ENCODE measurements at regions of chr13 and their contacts with region 1.

Region 1: DNA sequence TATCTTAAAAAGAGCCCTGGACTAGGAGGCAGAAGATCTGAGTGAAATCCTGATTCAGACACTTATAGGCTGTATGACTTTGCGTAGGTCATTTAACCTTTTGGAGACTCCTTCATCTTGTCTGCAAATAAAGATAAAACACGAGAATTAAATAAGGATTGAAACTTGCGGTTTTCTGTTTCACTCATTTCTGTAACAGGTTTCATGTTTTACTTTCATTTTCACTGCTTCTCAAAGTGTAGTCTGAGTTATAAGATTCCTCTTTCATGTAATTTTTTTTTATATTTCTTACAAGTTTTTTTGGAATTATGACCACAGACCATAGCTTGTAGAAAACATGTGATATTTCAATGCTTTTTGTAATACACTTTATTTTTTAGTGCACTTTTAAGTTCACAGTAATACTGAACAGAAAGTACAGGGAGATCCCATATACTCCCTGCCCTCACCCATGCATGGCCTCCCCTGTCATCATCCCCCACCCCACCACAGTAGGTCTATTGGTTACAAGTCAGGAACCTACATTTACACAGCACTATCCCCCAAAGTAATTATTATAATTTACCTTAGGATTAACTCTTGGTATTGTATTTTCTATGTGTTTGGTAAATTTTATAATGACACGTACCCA is 174.6 kb downstream of the ITGBL1 start:
- DNase-seq: peak; percentile 75
- H3K4me3 Mint-ChIP-seq: peak overlapping the region; percentile 14
- H3K27ac Mint-ChIP-seq: peak overlapping the region; percentile 25
- H3K4me1 Mint-ChIP-seq: peaks cover 18% of the 10 kb centered on the region
- H3K27me3 Mint-ChIP-seq: peaks cover 21% of the 10 kb centered on the region

Region 2: DNA sequence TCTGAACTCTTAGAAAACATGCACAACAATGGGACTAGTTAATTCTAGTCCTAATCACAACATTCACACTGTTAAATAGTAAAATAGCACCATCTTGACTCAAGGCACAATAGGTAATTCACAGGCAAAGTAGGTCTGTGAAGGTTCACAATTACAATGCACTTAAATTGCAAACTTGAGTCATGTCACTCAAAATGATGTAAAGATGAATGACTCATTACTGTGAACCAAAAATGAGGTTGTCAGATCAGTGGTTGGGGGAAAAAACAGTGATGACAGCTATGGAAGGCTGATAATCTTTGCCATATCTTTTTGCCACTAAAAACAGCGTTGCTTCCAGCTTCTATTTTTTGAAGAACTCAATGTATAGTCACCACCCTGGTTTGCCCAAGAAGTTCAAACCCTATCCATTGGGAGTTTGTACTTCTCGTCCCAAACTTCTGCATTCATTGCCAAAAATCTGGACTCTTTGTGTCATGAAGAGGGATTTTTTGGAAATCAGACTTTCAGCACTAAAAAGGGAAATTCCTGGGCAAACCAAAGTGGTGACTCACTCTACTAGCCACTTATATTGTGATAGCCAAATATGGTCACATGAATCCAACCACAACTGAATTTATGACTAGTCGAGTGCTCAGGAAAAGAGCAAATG is 751.5 kb before region 1 on chr13:
- intact Hi-C with region 1: loop called (anchors 5 kb)
- DNase-seq: peak; percentile 61
- H3K4me3 Mint-ChIP-seq: no peak overlapping the region
- H3K27ac Mint-ChIP-seq: peak overlapping the region; percentile 78
- H3K4me1 Mint-ChIP-seq: peaks cover 14% of the 10 kb centered on the region
- H3K27me3 Mint-ChIP-seq: peaks cover 4% of the 10 kb centered on the region

Region 3: GRCh38 chr13:101258071-101258470 is 369.0 kb before region 1 on chr13:
- intact Hi-C with region 1: loop called (anchors 1 kb)
- DNase-seq: peak; percentile 83
- H3K4me3 Mint-ChIP-seq: no peak overlapping the region
- H3K27ac Mint-ChIP-seq: no peak overlapping the region
- H3K4me1 Mint-ChIP-seq: peaks cover 5% of the 10 kb centered on the region
- H3K27me3 Mint-ChIP-seq: peaks cover 14% of the 10 kb centered on the region

Region 4: DNA sequence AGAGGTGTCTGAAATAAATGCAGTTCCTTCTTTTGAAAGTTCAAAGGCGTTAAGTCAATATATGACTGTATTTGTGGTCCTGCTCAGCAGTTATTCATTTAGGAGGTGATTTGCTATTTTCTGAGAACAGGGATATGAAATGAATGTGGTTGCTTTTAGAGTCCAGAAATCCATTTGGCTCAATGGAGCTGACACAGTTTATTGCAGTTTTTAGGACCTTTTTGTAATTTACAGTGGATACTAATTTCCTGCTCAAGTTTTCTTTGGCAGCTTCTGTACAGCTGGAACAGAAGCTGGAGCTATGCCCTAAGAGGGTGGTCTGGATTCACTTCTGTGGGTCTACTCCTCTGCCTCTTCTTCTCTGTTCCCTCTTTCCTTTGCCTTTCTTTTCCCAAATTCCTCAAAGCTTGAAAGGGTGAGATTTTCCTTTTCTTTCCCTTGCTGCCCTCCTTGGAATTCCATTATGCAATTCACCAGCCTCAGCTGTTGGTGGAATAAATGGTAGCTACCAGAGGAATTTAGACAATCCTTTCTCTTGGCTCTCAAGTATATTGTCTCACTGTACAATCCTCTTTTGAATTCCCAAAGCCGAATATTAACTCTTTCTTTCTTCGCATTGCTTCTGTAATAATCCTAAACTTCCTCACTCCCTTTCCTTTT is 134.7 kb before region 1 on chr13:
- intact Hi-C with region 1: no loop called
- DNase-seq: no peak
- H3K4me3 Mint-ChIP-seq: no peak overlapping the region
- H3K27ac Mint-ChIP-seq: no peak overlapping the region
- H3K4me1 Mint-ChIP-seq: no peaks in the 10 kb centered on the region
- H3K27me3 Mint-ChIP-seq: no peaks in the 10 kb centered on the region

Region 5: DNA sequence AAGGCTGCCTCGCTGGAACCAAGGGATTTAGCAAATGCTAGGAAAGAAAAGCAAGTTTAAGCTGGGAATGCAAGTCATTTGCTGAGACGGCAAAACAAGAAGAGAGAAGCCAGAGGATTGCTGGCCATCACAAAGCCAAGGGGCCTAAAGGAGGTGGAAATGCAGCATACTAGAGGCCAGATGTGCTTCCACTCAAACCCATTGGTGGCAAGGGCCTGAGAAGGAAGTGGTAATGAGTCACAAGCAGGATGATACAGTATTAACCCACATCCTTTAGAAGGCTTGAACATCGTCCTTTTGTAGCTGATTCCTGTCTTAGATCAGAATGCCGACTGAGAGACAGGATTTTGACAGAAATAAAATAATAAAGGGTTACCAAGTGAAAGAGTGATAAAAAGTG is 106.4 kb before region 1 on chr13:
- intact Hi-C with region 1: loop called (anchors 10 kb)
- DNase-seq: peak; percentile 62
- H3K4me3 Mint-ChIP-seq: peak overlapping the region; percentile 20
- H3K27ac Mint-ChIP-seq: no peak overlapping the region
- H3K4me1 Mint-ChIP-seq: peaks cover 13% of the 10 kb centered on the region
- H3K27me3 Mint-ChIP-seq: peaks cover 10% of the 10 kb centered on the region

Measured in activated CD4-positive, alpha-beta T cell treated with anti-CD3 and anti-CD28 coated beads, Interleukin-2, amount 10 ng/mL, durations not matched to agents 24 days and 14 days (primary cell).